ENCODE measurements at regions of chr6 and their contacts with region 1.

Region 1: DNA sequence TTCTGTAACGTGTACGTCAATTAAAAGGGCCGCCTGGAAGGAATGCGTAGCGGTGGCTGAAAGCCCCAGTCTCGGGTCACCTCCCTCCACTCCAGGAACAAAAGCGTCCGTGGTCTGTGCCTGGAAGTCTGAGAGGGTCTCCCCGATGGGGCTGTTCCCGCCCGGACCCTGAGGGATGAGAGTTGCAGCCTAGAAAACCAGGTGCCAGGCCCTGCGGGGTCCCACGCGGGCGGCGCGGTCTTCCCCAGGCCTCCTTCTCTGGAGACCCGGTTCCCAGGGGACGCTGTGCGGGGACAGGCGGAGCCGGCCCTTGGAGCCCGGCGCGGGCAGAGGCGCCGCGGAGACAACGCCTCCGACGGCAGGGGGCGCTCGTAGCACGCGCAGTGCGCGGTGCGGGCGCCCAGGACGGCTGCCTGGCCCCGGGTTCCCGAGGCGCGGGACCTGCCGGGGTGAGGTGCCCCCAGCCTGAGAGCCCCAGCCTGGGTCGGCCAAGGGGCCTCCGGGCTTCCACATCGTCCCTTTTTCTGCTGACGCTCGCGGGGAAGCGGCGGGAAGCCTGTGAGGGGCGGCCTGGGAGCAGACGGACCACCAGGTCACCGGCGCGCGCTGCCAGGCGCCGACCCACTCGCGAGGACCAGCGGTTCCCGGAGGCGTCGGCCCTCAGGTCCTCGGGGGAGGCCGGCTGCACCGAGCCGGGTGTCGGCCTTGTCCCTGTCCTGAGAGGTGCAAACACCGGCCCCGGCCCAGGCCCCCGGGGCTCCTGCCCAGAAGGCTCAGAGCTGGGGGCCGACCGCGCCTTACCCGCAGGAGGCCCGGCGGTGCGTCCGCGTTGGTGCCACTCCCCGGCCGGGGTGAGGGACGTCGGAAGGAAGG is 5.3 kb upstream of the FOXC1 start:
- DNase-seq: peak; percentile 84
- ATAC-seq: peak; percentile 94
- H3K4me3 ChIP-seq: peak overlapping the region; percentile 42
- H3K27ac ChIP-seq: no peak overlapping the region
- H3K4me1 ChIP-seq: peaks cover 16% of the 10 kb centered on the region
- H3K27me3 ChIP-seq: peaks cover 97% of the 10 kb centered on the region
- CTCF ChIP-seq: peak; percentile 95

Region 2: GRCh38 chr6:1348675-1349074 is 255.7 kb before region 1 on chr6:
- intact Hi-C with region 1: no loop called
- DNase-seq: no peak
- ATAC-seq: peak; percentile 96
- H3K4me3 ChIP-seq: no peak overlapping the region
- H3K27ac ChIP-seq: peak overlapping the region; percentile 44
- H3K4me1 ChIP-seq: peaks cover 26% of the 10 kb centered on the region
- H3K27me3 ChIP-seq: no peaks in the 10 kb centered on the region
- CTCF ChIP-seq: no peak

Region 3: GRCh38 chr6:2108700-2109306 is 504.4 kb after region 1 on chr6:
- intact Hi-C with region 1: loop called (anchors 5 kb)
- DNase-seq: no peak
- ATAC-seq: no peak
- H3K4me3 ChIP-seq: no peak overlapping the region
- H3K27ac ChIP-seq: no peak overlapping the region
- H3K4me1 ChIP-seq: peaks cover 4% of the 10 kb centered on the region
- H3K27me3 ChIP-seq: no peaks in the 10 kb centered on the region
- CTCF ChIP-seq: no peak